Activated T-helper 2 cell treated with anti-CD3 and anti-CD28 coated beads, Interferon-gamma antibody, Interleukin-2, Interleukin-4, amounts not matched to agents 10 μg/mL and 5 μg/mL and 100 μg/mL, durations not matched to agents 14 hours and 24 hours and 36 hours (primary cell): ENCODE measurements at regions of chr12 and their contacts with region 1.

Region 1: DNA sequence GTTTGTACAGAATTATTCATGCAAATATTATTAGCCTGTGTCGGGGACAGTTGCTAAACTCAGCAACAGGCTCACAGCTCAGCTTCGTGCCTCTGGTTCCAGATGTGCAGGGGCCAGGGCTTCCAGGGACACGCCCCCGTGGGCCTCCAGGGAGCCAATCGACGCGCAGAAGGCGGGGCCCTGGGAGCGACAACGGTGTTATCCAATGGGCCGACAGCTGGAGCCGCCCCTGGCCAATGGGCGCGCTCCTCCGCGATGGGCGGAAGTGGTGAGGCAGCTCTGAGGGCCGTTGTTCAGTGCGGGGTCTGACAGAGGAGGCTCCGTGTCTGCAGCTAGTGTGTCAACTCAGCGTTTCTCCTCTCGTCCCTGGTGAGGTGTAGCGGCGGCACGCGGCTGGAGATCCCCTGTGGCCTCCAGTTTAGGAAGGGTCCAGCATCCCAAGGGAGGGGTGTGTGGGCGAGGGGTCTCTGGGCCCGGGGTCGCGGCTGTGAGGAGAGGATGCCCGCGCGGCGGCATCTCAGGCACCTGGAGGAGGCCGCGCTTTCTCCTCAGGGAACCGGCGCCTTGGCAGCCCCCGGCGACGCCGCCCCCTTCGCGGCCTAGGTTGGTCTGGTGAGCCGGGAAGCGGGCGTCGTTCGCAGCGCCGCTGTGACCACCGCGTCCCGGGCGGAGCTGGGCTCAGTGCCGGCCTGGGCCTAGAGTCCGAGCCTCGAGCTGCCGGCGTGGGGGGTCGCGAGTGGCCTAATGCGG is at the start of gene TRAFD1:
- DNase-seq: peak; percentile 99
- H3K4me3 Mint-ChIP-seq: peak within 1 kb of the TSS; percentile 88
- H3K27ac Mint-ChIP-seq: peak within 1 kb of the TSS; percentile 81
- H3K4me1 Mint-ChIP-seq: peaks cover 33% of the 10 kb centered on the region
- H3K27me3 Mint-ChIP-seq: peaks cover 4% of the 10 kb centered on the region
- total RNA-seq, gene TRAFD1: 34.7 and 37.5 TPM in 2 replicates

Region 2: DNA sequence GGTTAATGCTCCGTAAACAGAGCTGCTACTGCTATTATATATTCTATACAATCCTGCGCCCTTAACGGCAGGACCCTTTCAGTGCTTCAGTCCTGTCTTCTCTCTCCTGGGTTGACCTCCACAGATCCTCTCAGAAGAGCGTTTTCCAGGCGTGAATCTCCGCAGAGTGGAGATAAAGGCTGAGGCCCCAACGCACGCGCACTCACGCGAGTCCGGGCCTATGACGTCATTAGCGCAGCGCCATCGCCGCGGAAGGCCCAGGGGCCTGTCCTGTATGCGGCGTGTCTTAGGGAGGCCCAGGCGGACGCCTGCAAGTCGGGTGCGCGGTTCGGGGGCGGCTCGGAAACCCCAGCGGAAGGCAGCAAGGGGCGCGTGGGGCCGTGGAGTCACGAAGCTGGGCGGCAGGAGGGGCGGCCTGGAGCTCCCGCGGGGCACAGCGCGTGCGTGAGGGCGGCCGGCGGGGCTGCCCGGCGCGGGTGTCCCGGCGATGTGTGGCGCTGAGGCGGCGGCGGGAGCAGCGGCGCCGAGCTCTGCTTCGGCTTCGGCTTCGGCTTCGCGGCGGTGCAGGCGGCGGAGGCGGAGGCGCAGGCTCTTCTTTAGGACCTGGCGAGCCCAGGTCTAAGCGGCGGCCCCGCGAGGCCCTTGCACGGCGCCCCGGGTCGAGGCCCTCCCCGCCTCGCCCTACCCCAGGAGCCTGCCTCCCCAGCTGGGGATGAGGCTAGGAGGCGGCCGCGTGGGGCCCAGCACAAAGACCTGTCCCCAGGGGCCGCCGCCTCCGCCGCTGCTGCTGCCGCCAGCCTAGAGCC is 283.5 kb before region 1 on chr12 and contains the start of gene MAPKAPK5:
- intact Hi-C with region 1: loop called (anchors 10 kb)
- DNase-seq: peak; percentile 95
- H3K4me3 Mint-ChIP-seq: peak within 1 kb of the TSS; percentile 97
- H3K27ac Mint-ChIP-seq: peak within 1 kb of the TSS; percentile 98
- H3K4me1 Mint-ChIP-seq: peaks cover 36% of the 10 kb centered on the region
- H3K27me3 Mint-ChIP-seq: no peaks in the 10 kb centered on the region
- total RNA-seq, gene MAPKAPK5: 66.4 and 68.1 TPM in 2 replicates

Region 3: DNA sequence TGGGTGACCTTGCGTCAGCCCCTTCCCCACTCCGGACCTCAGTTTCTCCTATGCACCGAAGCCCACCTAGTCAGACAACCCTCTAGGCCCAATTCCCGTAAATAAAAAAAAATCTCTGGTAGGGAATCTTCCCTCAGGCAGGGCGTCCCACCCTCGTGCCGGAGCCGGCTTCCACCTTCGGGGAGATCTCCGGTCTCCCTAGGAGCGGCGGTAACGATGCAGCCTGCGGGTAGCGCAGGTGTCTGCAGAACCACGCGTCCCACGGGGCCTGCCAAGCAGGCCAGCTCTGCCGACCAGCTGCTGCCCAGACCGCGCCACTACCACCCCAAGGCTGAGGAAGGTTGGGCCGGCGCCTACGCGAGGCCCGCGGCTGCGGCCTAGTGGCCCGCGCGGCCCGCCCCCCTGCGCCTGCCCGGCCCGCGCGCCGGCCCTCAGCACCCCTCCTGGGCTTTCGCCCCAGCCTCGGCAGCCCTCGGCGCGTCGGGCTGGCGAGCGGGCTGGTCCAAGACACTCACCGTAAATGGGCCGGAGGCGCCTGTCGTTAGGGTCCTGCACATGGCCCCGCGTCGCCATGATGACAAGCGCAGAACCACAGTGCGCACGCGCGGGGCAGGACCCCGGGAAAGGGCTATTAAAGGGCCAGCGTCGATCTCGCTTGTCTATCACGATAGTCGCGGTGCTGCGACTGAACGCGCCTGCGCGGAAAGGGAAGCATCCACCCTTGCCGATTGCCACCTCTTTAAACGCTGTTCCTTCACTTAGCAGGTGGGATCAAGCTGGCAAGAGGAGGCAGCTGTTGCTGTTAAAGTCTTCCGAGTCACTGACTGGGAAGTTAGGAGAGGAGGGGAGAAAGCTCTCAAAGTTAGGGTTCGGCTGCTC is 17.0 kb before region 1 on chr12 and contains the start of gene NAA25:
- intact Hi-C with region 1: loop called (anchors 1 kb)
- DNase-seq: peak; percentile 84
- H3K4me3 Mint-ChIP-seq: peak within 1 kb of the TSS; percentile 97
- H3K27ac Mint-ChIP-seq: peak within 1 kb of the TSS; percentile 98
- H3K4me1 Mint-ChIP-seq: peaks cover 47% of the 10 kb centered on the region
- H3K27me3 Mint-ChIP-seq: no peaks in the 10 kb centered on the region
- total RNA-seq, gene NAA25: 43.3 and 48.7 TPM in 2 replicates

Region 4: DNA sequence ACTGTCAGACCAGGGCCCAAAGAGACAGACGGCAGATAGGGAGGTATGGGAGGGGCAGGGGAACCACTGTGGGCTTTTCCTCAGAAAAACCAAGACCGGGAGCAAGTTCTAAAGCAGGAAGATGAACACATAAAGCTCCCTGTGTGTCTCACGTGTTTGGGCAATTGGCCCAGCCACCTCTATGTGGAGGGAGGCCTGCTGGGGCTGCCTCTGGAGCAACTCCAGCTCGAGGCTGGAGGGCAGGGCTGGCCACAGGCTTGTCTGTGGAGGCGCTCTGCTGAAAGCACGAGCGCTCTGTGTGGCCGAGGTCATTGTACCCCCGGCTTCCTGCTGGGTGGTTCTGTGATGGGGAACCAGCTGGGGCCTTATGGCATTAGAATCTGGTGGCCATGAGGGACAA is 36.3 kb after region 1 on chr12:
- intact Hi-C with region 1: no loop called
- DNase-seq: no peak
- H3K4me3 Mint-ChIP-seq: no peak overlapping the region
- H3K27ac Mint-ChIP-seq: no peak overlapping the region
- H3K4me1 Mint-ChIP-seq: no peaks in the 10 kb centered on the region
- H3K27me3 Mint-ChIP-seq: no peaks in the 10 kb centered on the region